Mammary epithelial cell (primary cell): ENCODE measurements at regions of chr17 and their contacts with region 1.

Region 1: GRCh38 chr17:76331083-76331482 is 22.6 kb downstream of the PRPSAP1 start:
- DNase-seq: no peak
- H3K4me3 ChIP-seq: no peak overlapping the region
- H3K27ac ChIP-seq: no peak overlapping the region
- H3K4me1 ChIP-seq: no peaks in the 10 kb centered on the region
- H3K27me3 ChIP-seq: no peaks in the 10 kb centered on the region
- CTCF ChIP-seq: no peak

Region 2: DNA sequence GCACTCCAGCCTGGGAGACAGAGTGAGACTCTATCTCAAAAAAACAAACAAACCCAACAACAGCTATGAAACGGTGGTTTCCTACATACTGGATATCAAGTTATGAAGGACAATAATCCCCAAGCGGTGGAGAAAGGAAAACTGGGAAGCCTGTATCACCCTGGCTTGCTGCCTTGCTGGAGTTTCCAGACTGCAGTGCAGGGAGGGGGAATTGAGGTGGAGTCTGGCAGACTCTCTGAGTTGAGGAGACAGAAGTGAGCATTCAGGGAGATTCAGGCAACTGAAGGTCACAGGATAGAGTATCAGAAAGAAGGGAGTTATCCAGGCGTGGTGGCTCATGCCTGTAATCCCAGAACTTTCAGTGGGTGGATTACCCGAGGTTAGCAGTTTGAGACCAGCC is 34.9 kb before region 1 on chr17:
- CTCF ChIA-PET with region 1: no interaction called
- dilution Hi-C with region 1: loop called (anchors 5 kb)
- in situ Hi-C with region 1: no loop called
- intact Hi-C with region 1: no loop called
- DNase-seq: no peak
- H3K4me3 ChIP-seq: no peak overlapping the region
- H3K27ac ChIP-seq: no peak overlapping the region
- H3K4me1 ChIP-seq: no peaks in the 10 kb centered on the region
- H3K27me3 ChIP-seq: no peaks in the 10 kb centered on the region
- CTCF ChIP-seq: no peak